Right ventricle myocardium inferior (tissue), 1 donor: ENCODE measurements at regions of chr9 and their contacts with region 1.

Region 1: DNA sequence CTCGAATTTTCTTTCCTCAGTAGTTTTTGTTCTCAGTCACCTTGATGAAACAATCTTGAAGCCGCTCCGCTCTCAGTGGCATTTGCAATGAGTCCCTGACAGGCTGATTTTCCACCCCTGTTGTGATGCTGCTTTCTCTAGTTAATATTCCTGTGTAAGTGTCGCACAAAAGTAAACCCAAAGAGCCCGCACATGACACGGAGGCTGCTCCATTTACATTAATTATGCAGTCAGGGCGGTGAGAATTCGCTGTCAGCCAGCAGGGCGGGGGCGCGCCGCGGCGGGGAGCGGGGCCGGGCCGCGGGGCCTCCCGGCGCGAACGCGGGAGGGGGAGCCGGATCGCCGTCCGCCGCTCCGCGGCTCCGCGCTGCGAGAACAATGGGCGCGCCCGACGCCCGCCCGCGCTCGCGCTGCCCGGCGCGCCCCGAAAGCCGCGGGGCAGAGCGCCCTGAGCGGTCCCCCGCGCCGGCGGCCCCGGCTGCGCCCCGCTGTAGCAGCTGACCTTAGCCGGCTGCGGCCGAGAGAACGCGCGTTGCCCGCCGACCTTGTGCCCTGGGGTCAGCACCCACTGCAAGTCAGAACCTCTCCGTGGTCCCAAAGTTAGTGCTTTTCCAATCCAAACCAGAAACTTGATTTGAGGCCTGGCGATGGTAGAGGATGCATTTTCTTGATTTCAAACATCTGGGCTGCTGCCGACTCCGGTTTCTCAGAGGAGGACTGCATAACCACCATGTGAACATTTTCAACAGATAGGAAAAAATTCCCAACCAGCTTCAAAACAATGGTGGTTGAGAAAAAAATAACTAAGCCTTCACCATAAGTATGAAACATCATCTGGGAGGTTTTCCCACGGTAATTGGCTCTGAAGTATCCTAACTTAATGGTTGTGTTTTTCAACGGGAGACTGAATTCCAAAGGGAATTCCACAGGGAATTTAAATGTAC is 142.6 kb downstream of the PBX3 start:
- DNase-seq: peak; percentile 59
- ATAC-seq: peak; percentile 74

Region 2: DNA sequence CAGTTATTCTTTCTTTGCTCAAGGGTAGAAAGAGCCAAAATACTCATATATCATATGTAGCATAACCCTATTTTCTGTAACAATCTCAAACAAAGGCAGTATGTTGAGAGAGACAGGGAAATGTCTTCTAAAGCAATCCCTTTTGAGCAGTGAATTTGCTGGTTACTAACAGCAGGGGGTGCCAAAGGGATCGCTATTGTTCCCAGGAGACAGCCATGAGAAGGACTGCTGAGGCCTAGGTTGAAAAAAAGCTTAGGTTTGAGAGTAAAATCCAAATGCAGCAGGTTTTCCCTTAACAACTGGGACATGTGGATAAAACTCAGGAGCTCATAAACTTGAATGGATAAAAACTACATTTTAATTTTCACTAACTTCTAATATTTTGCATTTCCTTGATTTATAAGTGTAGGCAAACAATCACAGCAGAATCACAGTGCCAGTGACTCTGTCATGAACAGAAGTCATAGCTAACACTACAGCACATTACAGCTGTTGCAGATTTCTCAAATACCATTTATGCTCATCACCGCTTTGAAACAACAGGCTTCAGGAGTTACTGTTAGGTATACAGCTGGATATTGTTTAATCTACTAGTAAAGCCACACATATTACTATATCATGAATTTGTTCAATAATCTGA is 331.2 kb before region 1 on chr9:
- intact Hi-C with region 1: loop called (anchors 10 kb)
- DNase-seq: no peak
- ATAC-seq: peak; percentile 74

Region 3: DNA sequence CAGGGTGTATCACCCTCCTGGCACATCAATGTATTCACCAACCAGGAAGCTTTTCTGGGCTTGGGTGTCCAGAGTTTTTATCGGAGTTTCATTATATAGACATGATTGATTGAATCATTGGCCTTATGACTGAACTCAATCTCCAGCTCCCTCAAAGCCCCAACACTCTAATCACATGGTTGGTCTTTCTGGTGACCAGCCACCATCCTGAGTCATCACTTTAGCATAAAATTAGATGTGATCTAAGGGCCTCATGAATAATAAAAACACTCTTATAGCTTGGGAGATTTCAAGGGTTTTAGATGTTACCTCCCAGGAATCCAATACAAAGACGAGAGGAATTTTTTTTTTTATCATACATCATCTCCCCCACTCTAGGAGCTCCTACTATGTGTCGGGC is 150.3 kb before region 1 on chr9:
- intact Hi-C with region 1: no loop called
- DNase-seq: no peak
- ATAC-seq: no peak

Region 4: DNA sequence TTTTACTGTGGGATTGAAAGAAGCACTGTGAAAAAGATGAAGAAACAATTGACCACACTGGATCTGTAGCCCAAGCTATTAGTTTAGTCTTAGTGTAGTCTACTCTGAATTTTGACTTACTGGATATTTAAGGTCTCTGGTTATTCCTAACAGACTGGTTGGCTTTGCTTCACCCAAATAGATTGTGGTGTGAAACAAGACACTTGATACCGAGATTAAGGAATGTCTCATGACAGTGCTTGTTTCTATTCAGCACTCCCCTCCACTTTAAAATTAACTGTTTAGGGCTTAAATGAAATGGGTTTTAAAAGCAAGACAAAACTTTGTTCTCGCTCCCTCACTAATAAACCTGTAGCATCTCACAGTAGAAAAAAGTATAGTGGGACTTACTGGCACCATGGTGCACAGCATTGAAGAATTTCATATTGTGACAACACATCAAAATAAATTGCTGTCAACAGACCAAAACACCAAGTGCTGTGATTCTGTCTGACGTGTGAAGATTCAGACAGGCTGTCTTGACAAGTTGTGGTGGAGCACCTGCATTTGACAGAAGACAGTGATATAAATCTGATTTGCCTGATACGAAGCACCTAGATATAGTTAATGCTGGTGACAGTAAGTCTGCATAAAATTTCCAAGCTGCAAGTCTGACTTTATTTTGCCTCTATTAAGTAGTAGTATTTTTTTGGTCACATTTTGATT is 69.5 kb before region 1 on chr9:
- intact Hi-C with region 1: loop called (anchors 2 kb)
- DNase-seq: no peak
- ATAC-seq: peak; percentile 62